Activated T-helper 2 cell treated with anti-CD3 and anti-CD28 coated beads, Interferon-gamma antibody, Interleukin-2, Interleukin-4, amounts not matched to agents 10 μg/mL and 5 μg/mL and 100 μg/mL, durations not matched to agents 14 hours and 24 hours and 36 hours (primary cell): ENCODE measurements at regions of chr19 and their contacts with region 1.

Region 1: DNA sequence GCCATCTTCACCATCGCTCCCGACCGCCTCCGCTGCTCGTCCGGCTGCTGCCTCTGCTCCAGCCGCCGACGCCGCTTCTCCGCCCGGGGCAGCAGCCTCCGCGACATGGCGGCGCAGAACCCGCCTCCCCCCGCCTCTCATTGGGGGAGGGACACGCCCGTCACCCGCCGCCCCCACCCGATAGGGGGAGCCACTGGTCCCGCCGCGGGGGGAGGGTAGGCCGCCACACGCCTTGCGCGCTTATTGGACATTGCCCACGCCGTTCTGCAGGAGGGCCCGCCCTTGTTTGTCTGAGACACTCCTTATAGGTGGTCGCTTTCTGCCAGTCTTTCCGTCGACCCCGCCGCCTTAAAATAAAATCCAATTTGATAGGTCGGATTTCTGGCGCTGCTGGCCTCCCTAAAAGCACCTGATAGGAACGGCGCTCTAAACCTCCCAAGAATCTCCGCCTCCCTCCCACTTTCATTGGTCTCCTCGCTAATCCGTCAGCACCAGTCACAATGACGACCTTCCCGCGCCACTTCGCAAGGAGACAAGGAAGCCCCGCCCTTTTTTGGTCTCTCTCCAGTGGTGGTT is at the start of gene HNRNPL:
- DNase-seq: peak; percentile 99
- H3K4me3 Mint-ChIP-seq: peak within 1 kb of the TSS; percentile 90
- H3K27ac Mint-ChIP-seq: peak within 1 kb of the TSS; percentile 99
- H3K4me1 Mint-ChIP-seq: peaks cover 33% of the 10 kb centered on the region
- H3K27me3 Mint-ChIP-seq: no peaks in the 10 kb centered on the region
- total RNA-seq, gene HNRNPL: 700 and 708 TPM in 2 replicates

Region 2: DNA sequence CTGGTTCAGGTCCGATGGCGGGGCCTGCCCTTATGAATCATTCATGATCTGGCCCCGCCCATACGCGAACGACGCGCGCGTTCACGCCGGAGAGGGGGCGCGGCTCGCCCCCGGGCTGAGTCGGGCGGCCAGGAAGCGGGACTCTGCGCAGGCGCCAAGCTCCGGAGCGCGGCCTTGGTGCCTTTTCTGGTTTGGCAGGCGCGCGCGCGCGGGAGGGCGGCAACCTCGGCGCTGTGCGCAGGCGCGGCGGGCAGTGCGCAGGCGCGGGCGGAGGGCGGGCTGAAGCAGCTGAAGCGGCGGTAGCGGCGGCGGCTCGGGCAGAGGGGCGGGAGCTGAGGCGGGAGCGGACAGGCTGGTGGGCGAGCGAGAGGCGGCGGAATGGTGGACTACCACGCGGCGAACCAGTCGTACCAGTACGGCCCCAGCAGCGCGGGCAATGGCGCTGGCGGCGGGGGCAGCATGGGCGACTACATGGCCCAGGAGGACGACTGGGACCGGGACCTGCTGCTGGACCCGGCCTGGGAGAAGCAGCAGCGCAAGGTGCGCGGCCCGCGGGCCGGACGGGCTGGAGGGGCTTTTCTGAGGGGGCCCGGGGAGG is 202.5 kb before region 1 on chr19 and contains the start of gene ACTN4:
- intact Hi-C with region 1: loop called (anchors 2 kb)
- DNase-seq: peak; percentile 100
- H3K4me3 Mint-ChIP-seq: peak within 1 kb of the TSS; percentile 99
- H3K27ac Mint-ChIP-seq: peak within 1 kb of the TSS; percentile 79
- H3K4me1 Mint-ChIP-seq: peaks cover 32% of the 10 kb centered on the region
- H3K27me3 Mint-ChIP-seq: no peaks in the 10 kb centered on the region
- total RNA-seq, gene ACTN4: 329 and 334 TPM in 2 replicates

Region 3: GRCh38 chr19:38743394-38744295 is 106.3 kb before region 1 on chr19:
- intact Hi-C with region 1: no loop called
- DNase-seq: no peak
- H3K4me3 Mint-ChIP-seq: no peak overlapping the region
- H3K27ac Mint-ChIP-seq: no peak overlapping the region
- H3K4me1 Mint-ChIP-seq: peaks cover 4% of the 10 kb centered on the region
- H3K27me3 Mint-ChIP-seq: peaks cover 5% of the 10 kb centered on the region

Region 4: DNA sequence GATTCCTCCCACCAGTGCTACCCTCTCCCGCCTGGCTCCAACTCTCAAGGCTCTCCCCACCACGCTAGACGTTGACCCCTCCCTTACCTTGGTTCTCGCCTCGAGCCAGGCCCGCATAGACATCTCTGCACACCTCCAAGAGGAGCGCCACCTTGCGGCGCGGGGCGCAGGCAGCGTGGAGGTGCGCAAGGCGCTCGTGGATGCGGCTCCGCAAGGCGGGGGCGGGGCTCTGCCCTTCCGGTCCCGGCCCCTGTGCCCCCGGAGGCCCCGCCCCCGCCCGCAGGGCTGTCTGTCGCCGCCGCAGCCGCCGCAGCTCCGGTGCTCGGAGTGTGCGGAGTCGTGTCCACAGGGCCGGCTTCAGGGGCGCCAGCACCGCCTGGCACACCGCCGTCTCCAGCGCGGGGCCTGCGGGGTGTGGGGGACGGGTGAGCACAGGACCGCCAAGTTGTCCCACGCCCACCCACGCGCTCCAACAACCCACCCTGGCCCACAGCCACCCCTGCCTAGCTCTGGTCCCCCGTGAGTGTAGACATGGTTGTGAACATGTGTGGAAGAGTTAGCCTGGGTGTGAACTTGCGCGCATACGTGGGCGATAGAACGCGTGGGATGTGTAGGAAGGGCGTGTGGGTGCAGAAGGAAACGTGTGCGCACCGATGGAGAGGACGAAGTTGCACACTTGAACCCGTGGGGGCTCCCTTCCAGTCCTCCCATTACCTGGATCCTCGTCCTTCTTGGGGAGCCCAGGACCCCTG is 20.1 kb after region 1 on chr19:
- intact Hi-C with region 1: loop called (anchors 2 kb)
- DNase-seq: peak; percentile 91
- H3K4me3 Mint-ChIP-seq: peak overlapping the region; percentile 83
- H3K27ac Mint-ChIP-seq: peak overlapping the region; percentile 82
- H3K4me1 Mint-ChIP-seq: peaks cover 28% of the 10 kb centered on the region
- H3K27me3 Mint-ChIP-seq: no peaks in the 10 kb centered on the region

Region 5: GRCh38 chr19:38929929-38930775 is 80.2 kb after region 1 on chr19 and contains the start of gene SARS2:
- intact Hi-C with region 1: loop called (anchors 1 kb)
- DNase-seq: peak; percentile 92
- H3K4me3 Mint-ChIP-seq: peak within 1 kb of the TSS; percentile 94
- H3K27ac Mint-ChIP-seq: peak within 1 kb of the TSS; percentile 97
- H3K4me1 Mint-ChIP-seq: peaks cover 29% of the 10 kb centered on the region
- H3K27me3 Mint-ChIP-seq: no peaks in the 10 kb centered on the region
- total RNA-seq, gene SARS2: 41.1 and 45.2 TPM in 2 replicates

Region 6: GRCh38 chr19:39397360-39398296 is 547.7 kb after region 1 on chr19:
- intact Hi-C with region 1: loop called (anchors 10 kb)
- DNase-seq: peak; percentile 87
- H3K4me3 Mint-ChIP-seq: peak overlapping the region; percentile 46
- H3K27ac Mint-ChIP-seq: peak overlapping the region; percentile 83
- H3K4me1 Mint-ChIP-seq: peaks cover 45% of the 10 kb centered on the region
- H3K27me3 Mint-ChIP-seq: no peaks in the 10 kb centered on the region